ENCODE measurements at regions of chr3 and their contacts with region 1.

Region 1: DNA sequence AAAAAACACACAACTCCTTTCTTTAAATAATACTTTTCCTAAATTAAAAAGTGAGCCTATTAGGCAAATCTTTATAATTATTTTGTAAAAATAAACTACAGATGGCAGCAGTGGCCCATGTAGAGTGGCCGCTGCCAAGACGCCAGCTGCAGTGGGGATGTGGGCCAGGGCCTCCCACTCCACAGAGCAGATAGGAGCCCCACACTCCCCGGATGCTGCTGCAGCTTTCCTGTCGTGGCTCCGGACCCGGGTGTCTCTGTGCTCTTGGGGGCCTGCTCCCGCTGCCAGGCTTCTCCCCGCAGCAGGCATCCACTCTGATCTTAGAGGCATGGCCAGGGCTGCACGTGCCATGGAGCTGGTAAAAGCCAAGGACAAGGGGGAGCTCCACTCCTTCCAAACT is 67.5 kb downstream of the PROS1 start:
- DNase-seq: no peak
- ATAC-seq: peak; percentile 19
- H3K4me3 ChIP-seq: no peak overlapping the region
- H3K27ac ChIP-seq: no peak overlapping the region
- H3K4me1 ChIP-seq: no peaks in the 10 kb centered on the region
- H3K27me3 ChIP-seq: no peaks in the 10 kb centered on the region

Region 2: DNA sequence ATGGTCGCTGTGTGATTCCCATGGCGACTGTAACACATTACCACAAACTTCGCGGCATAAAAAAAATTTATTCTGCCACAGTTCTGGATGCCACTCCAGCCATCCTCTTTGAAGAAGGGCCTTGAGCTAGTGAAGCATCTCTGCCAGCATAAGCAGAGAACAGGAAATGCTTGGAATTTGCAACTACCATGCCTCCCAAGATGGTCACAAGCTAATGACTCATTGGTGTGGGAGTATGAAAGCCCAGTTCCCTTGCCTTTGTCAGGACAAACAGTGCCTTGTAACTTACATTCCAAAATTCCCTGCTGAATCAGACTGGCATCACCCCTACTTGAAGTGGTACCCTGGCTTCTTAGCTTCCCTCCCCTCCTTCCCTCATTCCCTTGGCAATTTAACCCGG is 62.3 kb before region 1 on chr3:
- intact Hi-C with region 1: loop called in 1 of 2 experiments (anchors 10 kb)
- DNase-seq: no peak
- ATAC-seq: peak; percentile 88
- H3K4me3 ChIP-seq: no peak overlapping the region
- H3K27ac ChIP-seq: no peak overlapping the region
- H3K4me1 ChIP-seq: peaks cover 0 to 2% of the 10 kb centered on the region in 2 donors
- H3K27me3 ChIP-seq: no peaks in the 10 kb centered on the region

Region 3: DNA sequence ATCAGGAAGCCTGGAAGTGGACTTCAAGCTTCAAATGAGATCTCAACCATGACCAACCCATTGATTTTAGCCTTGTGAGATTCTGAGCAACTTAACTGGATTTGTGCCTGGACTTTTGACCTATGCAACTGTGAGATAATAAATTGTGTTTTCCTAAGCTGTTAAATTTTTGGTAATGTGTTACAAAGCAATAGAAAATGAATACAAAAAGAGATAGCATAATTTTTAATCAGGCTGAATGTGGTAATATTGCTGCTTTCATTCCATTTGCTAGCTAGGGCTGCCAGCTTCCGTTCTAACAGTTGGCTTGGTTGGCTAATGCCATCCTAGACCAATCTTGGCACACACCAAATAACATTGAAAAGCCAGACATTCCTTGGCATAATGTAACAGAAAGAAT is 55.2 kb after region 1 on chr3:
- intact Hi-C with region 1: no loop called
- DNase-seq: no peak
- ATAC-seq: no peak
- H3K4me3 ChIP-seq: no peak overlapping the region
- H3K27ac ChIP-seq: peak overlapping the region in 1 of 2 donors; percentile 75
- H3K4me1 ChIP-seq: peaks cover 8% of the 10 kb centered on the region in 2 donors
- H3K27me3 ChIP-seq: no peaks in the 10 kb centered on the region

Region 4: GRCh38 chr3:93973131-93974126 is 67.2 kb after region 1 on chr3 and contains the start of gene PROS1:
- intact Hi-C with region 1: loop called in 1 of 2 experiments (anchors 5 kb)
- DNase-seq: peak; percentile 93
- ATAC-seq: peak; percentile 97
- H3K4me3 ChIP-seq: peak within 1 kb of the TSS; percentile 57 to 67
- H3K27ac ChIP-seq: peak within 1 kb of the TSS; percentile 70 to 79
- H3K4me1 ChIP-seq: peaks cover 0 to 5% of the 10 kb centered on the region in 2 donors
- H3K27me3 ChIP-seq: no peaks in the 10 kb centered on the region
- total RNA-seq, gene PROS1: 81.1 to 132 TPM

Region 5: DNA sequence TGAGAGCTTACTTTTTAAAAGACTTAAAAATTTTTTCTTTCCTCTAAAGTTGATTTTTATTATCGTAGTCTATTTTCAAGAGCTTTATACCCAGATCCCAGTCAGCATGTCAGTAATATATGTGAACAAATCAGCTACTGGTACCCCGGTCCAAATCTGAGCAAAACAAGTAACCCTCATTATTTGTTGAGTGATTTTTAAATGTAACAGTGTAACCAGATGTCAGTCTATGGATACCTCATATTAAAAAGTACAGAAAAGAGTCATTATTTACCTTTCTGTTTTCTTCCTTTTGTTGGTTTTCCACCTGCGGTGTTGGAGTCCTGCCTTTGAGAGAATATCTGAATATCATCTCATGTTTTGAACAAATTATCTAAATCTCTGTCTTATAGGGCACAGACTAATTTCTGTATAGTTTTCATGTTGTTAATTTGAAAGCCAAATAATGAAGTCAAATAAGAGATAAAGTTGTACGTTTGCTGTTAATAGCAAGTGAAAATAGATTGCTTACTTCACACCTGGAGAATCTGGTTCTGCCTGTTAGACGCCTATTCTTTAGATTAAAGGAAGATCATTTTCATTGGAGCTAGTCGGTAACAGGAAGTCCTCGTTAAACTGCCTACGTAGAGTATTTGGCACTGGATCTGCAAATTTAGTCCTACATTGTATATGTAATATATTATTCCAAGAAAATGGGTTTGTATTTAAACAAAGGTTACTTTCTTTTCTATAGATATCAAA is 122.0 kb after region 1 on chr3 and contains the start of gene STX19:
- intact Hi-C with region 1: no loop called
- DNase-seq: no peak
- ATAC-seq: no peak
- H3K4me3 ChIP-seq: no peak within 1 kb of the TSS
- H3K27ac ChIP-seq: no peak within 1 kb of the TSS
- H3K4me1 ChIP-seq: no peaks in the 10 kb centered on the region
- H3K27me3 ChIP-seq: no peaks in the 10 kb centered on the region
- total RNA-seq, gene STX19: 0.54 TPM in 1 of 2 donors, not detected in the other

Region 6: DNA sequence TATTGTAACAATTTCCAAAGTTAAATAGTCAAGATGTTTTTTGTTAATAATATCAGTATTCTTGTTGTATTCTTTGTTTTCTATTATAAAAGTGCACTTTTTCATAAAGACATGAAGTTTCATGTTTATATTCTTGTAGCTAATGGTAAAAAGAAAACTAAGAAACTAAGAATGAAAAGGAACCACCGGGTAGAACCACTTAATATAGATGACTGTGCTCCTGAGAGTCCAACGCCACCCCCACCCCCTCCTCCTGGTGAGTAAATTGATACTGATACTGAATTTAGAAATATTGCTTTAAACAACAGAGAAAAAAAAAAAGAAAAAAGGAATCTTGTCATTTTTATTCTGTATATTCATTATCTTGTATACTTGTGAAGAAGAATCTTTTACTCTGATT is 143.0 kb after region 1 on chr3:
- intact Hi-C with region 1: no loop called
- DNase-seq: no peak
- ATAC-seq: no peak
- H3K4me3 ChIP-seq: no peak overlapping the region
- H3K27ac ChIP-seq: no peak overlapping the region
- H3K4me1 ChIP-seq: no peaks in the 10 kb centered on the region
- H3K27me3 ChIP-seq: no peaks in the 10 kb centered on the region

Region 7: DNA sequence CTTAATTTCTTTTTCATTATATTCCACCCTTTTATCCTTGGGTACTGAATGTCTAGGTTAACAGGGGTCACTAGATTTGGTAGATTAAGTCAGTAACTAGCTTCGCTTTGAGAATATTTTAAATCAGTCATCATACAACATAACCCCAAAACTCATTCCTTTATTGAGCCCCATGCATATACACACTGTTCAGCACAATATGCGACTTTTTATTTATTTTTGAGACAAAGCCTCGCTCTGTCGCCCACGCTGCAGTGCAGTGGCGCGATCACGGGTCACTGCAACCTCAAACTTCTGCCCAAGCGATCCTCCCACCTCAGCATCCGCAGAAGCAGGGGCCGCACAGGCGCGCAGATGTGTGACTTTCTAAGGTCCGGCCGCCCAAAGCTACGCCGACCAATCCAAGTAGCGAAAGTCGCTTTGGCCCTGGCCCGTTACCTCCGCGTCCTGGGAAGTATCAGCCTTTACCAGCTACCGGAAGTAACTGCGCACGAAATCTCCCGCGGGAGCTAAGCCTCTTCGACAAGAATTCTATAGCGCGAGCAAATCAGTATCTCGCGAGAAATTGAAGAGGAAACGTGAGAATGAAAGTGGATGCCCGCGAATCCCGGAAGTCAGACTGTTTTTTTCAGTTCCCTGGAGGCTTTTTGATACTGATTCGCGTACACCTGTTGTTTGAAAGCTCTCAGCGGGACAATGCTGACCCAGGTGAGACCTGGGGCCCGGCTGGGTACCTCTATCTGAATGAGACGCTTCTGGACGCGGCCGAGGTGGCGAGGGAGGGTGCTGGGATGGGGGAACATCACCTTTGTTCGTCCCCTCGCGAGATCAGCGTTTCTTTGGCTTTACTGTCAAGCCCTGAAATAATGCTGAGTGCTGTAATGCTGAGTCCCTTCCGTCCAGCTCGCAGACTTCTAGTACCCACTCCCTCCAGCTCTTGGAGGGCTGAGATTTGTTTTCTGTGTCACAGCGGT is 156.5 kb after region 1 on chr3 and contains the starts of genes DHFR2 and NSUN3:
- intact Hi-C with region 1: loop called in 1 of 2 experiments (anchors 10 kb)
- DNase-seq: peak; percentile 96 to 97
- ATAC-seq: peak; percentile 97
- H3K4me3 ChIP-seq: peak within 1 kb of the TSS; percentile 60 to 92
- H3K27ac ChIP-seq: peak within 1 kb of the TSS; percentile 57 to 96
- H3K4me1 ChIP-seq: peaks cover 0 to 3% of the 10 kb centered on the region in 2 donors
- H3K27me3 ChIP-seq: no peaks in the 10 kb centered on the region
- total RNA-seq, gene DHFR2: 4.5 to 7.1 TPM
- total RNA-seq, gene NSUN3: 15.5 to 20.0 TPM

Measured in aorta (tissue), 5 donors.